Stomach (tissue), 19 donors: ENCODE measurements at regions of chr11 and their contacts with region 1.

Region 1: GRCh38 chr11:33362051-33362910 is 105.1 kb downstream of the HIPK3 start:
- DNase-seq: peak in 1 of 2 donors; percentile 74
- H3K4me3 ChIP-seq: no peak overlapping the region
- H3K27ac ChIP-seq: no peak overlapping the region
- H3K4me1 ChIP-seq: no peaks in the 10 kb centered on the region
- H3K27me3 ChIP-seq: no peaks in the 10 kb centered on the region
- CTCF ChIP-seq: peak in 5 of 7 experiments; percentile 34 to 78 (median 69)
- EP300 ChIP-seq: no peak
- POLR2A ChIP-seq: no peak

Region 2: GRCh38 chr11:33687733-33688479 is 325.6 kb after region 1 on chr11:
- intact Hi-C with region 1: loop called (anchors 10 kb)
- DNase-seq: peak in 1 of 2 donors; percentile 84
- H3K4me3 ChIP-seq: no peak overlapping the region
- H3K27ac ChIP-seq: no peak overlapping the region
- H3K4me1 ChIP-seq: peaks cover 24 to 41% (median 32%) of the 10 kb centered on the region in 4 donors
- H3K27me3 ChIP-seq: no peaks in the 10 kb centered on the region
- CTCF ChIP-seq: peak in 5 of 7 experiments; percentile 19 to 55 (median 45)
- EP300 ChIP-seq: no peak
- POLR2A ChIP-seq: no peak

Region 3: GRCh38 chr11:33829433-33830141 is 467.3 kb after region 1 on chr11:
- intact Hi-C with region 1: loop called (anchors 10 kb)
- DNase-seq: peak; percentile 67 to 86
- H3K4me3 ChIP-seq: peak overlapping the region; percentile 41 to 56 (median 50)
- H3K27ac ChIP-seq: no peak overlapping the region
- H3K4me1 ChIP-seq: peaks cover 7 to 14% (median 12%) of the 10 kb centered on the region in 4 donors
- H3K27me3 ChIP-seq: peaks cover 0 to 92% (median 20%) of the 10 kb centered on the region in 3 donors
- CTCF ChIP-seq: peak in 5 of 7 experiments; percentile 46 to 70 (median 58)
- EP300 ChIP-seq: no peak
- POLR2A ChIP-seq: no peak